H1 (cell line): ENCODE measurements at regions of chr20 and their contacts with region 1.

Region 1: GRCh38 chr20:22617160-22617559 is 32.8 kb upstream of the FOXA2 start:
- DNase-seq: peak in 1 of 2 experiments; percentile 27
- H3K4me3 ChIP-seq: no peak overlapping the region
- H3K27ac ChIP-seq: no peak overlapping the region
- H3K4me1 ChIP-seq: peaks cover 0 to 9% (median 6%) of the 10 kb centered on the region in 4 experiments; a peak in 4 of 7 replicates
- H3K27me3 ChIP-seq: peaks cover 0 to 10% (median 7%) of the 10 kb centered on the region in 4 experiments; a peak in 3 of 7 replicates
- CTCF ChIP-seq: no peak
- EP300 ChIP-seq: no peak
- POLR2A ChIP-seq: no peak
- RAD21 ChIP-seq: no peak

Region 2: DNA sequence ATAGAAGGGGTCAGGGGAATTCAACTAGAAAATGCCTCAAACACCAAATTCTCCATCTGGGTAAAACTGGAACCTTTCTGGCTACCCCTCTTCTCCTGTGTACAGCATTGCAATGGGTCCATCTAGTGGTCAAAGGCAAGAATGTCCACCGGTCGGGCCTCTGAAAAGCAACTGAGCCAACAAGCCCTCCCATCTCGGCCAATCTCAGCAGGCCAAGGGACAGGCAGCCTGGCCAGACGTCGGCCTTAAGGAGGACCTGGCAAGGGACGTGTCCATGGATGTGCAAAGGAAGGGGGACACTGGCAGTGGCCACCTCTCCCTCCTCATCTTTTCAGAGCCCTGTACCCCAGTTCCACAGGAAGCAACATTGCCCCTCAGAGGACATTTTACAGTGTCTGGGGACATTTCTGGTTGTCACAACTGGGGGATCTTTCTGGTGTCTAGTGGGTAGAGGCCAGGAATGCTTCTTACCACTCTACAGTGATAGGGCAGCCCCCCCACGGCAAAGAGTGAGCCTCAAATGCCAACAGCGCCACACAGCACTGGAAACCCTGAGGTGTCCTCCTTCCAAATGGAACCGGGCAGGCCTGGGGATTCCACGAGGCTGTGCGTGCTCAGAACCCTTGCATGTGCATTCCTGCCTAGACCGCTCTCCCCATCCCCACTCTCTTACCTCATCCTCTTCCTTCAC is 67.1 kb after region 1 on chr20:
- CTCF ChIA-PET with region 1: interaction called, 17 read pairs
- POLR2A ChIA-PET with region 1: no interaction called
- DNase-seq: peak; percentile 47 to 83
- H3K4me3 ChIP-seq: no peak overlapping the region
- H3K27ac ChIP-seq: no peak overlapping the region
- H3K4me1 ChIP-seq: no peaks in the 10 kb centered on the region
- H3K27me3 ChIP-seq: no peaks in the 10 kb centered on the region; a peak in 3 of 7 replicates
- CTCF ChIP-seq: peak; percentile 69 to 93 (median 91)
- EP300 ChIP-seq: no peak
- POLR2A ChIP-seq: no peak
- RAD21 ChIP-seq: peak; percentile 99